ENCODE measurements at regions of chrX and their contacts with region 1.

Region 1: DNA sequence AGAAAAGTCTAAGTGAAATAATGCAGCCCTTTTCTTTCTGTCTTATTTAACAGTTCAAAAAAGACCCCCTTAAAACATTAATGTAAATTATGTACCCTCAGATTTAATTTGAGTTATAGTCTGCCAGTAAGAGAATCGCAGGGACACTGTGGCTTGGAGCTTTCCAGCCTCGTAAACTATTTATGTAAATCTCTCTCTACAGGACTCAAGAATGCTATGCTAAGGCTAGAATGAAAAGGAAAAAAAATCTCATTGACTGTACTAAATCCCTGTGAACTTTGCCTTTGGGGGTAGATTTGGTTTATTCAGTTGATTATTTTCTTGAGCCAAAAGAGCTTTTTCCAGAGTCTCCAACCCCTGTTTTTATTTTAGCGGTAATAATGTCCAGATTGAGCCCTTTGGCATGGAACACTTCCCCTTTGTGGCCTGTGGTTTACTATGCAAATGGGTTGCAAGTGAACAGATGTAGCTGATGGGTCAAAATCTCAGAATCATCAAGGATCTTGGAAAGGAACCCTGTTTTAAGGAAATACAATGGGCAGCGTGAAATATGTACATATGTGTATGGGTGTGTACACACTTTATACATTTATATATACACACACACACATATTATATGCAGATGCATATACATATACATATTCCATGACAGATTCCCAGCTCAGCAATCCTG is 73.0 kb downstream of the FAM9B start:
- DNase-seq: no peak
- ATAC-seq: no peak
- H3K4me3 ChIP-seq: no peak overlapping the region
- H3K27ac ChIP-seq: no peak overlapping the region
- H3K4me1 ChIP-seq: no peaks in the 10 kb centered on the region
- H3K27me3 ChIP-seq: no peaks in the 10 kb centered on the region
- CTCF ChIP-seq: no peak
- EP300 ChIP-seq: no peak
- POLR2A ChIP-seq: no peak
- RAD21 ChIP-seq: no peak

Region 2: DNA sequence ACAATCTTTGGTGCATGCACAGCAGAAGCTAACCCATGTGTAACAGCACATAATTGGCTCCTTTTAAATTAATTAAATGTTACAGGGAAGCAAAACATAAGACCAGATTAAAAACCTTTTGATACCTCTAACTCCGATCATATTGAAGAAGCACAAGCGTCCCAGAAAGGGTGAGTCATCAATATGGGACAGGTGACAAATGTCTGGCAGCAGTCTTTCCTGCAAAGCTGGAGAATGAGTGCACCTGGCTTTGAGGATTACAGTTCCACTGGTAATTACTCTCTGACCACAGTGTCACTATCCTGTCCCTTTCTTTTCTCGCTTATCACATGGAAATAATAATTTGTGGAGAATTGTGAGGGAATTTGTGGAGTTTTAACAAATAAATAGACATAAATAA is 21.6 kb before region 1 on chrX:
- CTCF ChIA-PET with region 1: no interaction called
- POLR2A ChIA-PET with region 1: no interaction called
- RAD21 ChIA-PET with region 1: no interaction called
- SMC1A ChIA-PET with region 1: no interaction called
- in situ Hi-C with region 1: no loop called
- intact Hi-C with region 1: no loop called
- DNase-seq: no peak
- ATAC-seq: no peak
- H3K4me3 ChIP-seq: no peak overlapping the region
- H3K27ac ChIP-seq: no peak overlapping the region
- H3K4me1 ChIP-seq: no peaks in the 10 kb centered on the region
- H3K27me3 ChIP-seq: no peaks in the 10 kb centered on the region
- CTCF ChIP-seq: no peak
- EP300 ChIP-seq: no peak
- POLR2A ChIP-seq: no peak
- RAD21 ChIP-seq: no peak

Region 3: DNA sequence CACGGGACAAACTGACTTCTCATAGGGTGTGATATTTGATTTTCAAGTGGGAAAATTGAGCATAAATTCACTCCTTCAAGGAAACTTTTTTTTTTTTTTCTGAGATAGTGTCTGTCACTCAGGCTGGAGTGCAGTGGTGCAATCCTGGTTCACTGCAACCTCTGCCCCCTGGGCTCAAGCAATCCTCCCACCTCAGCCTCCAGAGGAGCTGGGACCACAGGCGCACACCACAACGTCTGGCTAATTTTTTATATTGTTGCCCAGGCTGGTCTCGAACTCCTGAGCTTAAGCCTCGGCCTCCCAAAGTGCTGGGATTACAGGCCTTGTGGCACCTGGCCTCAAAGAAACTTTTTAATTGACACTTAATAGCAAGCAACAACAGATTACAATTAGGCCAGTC is 1020.0 kb after region 1 on chrX:
- CTCF ChIA-PET with region 1: no interaction called
- POLR2A ChIA-PET with region 1: no interaction called
- RAD21 ChIA-PET with region 1: no interaction called
- SMC1A ChIA-PET with region 1: no interaction called
- in situ Hi-C with region 1: no loop called
- intact Hi-C with region 1: loop called (anchors 10 kb)
- DNase-seq: no peak
- ATAC-seq: no peak
- H3K4me3 ChIP-seq: no peak overlapping the region
- H3K27ac ChIP-seq: no peak overlapping the region
- H3K4me1 ChIP-seq: no peaks in the 10 kb centered on the region
- H3K27me3 ChIP-seq: no peaks in the 10 kb centered on the region
- CTCF ChIP-seq: no peak
- EP300 ChIP-seq: no peak
- POLR2A ChIP-seq: no peak
- RAD21 ChIP-seq: no peak